ENCODE measurements at regions of chr4 and their contacts with region 1.

Region 1: GRCh38 chr4:110193822-110194761 is 4.3 kb downstream of the ELOVL6 start:
- DNase-seq: peak; percentile 35 to 88 (median 80)
- ATAC-seq: peak; percentile 90
- H3K4me3 ChIP-seq: no peak overlapping the region
- H3K4me3 Mint-ChIP-seq: peak overlapping the region in 9 of 10 donors; percentile 19 to 70 (median 49)
- H3K27ac ChIP-seq: peak overlapping the region; percentile 59
- H3K27ac Mint-ChIP-seq: peak overlapping the region; percentile 68 to 97 (median 92)
- H3K4me1 ChIP-seq: peaks cover 0 to 11% of the 10 kb centered on the region in 2 donors
- H3K4me1 Mint-ChIP-seq: peaks cover 16 to 51% (median 29%) of the 10 kb centered on the region in 7 donors
- H3K27me3 ChIP-seq: no peaks in the 10 kb centered on the region
- H3K27me3 Mint-ChIP-seq: no peaks in the 10 kb centered on the region

Region 2: DNA sequence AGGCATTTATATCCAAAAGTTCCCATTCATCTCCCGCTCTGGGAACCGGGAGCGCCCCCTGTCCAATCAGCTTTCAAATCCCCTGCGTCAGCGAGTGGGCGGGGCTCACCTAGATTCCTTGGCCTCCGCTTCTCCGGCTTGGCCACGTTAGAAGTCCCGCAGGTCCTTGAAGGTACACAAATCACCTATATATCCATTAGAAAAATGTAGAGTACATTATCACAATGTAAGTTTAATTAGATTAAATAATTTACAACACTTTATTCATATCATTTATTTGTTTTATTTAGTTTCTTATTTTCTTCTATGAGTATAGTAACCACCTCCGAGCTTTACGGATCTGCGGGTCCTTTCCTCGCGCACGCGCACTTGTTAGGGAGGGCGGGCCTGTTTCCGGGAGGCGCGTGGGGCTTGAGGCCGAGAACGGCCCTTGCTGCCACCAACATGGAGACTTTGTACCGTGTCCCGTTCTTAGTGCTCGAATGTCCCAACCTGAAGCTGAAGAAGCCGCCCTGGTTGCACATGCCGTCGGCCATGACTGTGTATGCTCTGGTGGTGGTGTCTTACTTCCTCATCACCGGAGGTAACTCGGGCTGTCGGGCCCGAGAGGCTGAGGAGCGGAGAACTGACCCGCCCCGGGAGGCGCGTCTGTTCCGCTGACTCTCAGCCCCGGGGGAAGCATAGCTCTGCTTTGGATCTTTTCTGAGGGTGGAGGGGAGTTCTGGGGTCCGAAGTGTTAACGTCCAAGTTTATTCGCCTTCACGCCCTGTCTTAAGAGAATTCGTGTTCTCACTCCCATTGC is 1543.7 kb before region 1 on chr4 and contains the start of gene OSTC:
- CTCF ChIA-PET with region 1: no interaction called
- POLR2A ChIA-PET with region 1: no interaction called
- intact Hi-C with region 1: loop called (anchors 2 to 10 kb)
- DNase-seq: peak; percentile 88 to 95 (median 91)
- ATAC-seq: peak; percentile 94
- H3K4me3 ChIP-seq: peak within 1 kb of the TSS; percentile 98
- H3K4me3 Mint-ChIP-seq: peak within 1 kb of the TSS; percentile 90 to 99 (median 94)
- H3K27ac ChIP-seq: peak within 1 kb of the TSS; percentile 96
- H3K27ac Mint-ChIP-seq: peak within 1 kb of the TSS; percentile 89 to 99 (median 98)
- H3K4me1 ChIP-seq: peaks cover 8 to 13% of the 10 kb centered on the region in 2 donors
- H3K4me1 Mint-ChIP-seq: peaks cover 22 to 49% (median 41%) of the 10 kb centered on the region in 7 donors
- H3K27me3 ChIP-seq: no peaks in the 10 kb centered on the region
- H3K27me3 Mint-ChIP-seq: no peaks in the 10 kb centered on the region
- total RNA-seq, gene OSTC: 31.8 to 98.2 (median 55.6) TPM

Region 3: DNA sequence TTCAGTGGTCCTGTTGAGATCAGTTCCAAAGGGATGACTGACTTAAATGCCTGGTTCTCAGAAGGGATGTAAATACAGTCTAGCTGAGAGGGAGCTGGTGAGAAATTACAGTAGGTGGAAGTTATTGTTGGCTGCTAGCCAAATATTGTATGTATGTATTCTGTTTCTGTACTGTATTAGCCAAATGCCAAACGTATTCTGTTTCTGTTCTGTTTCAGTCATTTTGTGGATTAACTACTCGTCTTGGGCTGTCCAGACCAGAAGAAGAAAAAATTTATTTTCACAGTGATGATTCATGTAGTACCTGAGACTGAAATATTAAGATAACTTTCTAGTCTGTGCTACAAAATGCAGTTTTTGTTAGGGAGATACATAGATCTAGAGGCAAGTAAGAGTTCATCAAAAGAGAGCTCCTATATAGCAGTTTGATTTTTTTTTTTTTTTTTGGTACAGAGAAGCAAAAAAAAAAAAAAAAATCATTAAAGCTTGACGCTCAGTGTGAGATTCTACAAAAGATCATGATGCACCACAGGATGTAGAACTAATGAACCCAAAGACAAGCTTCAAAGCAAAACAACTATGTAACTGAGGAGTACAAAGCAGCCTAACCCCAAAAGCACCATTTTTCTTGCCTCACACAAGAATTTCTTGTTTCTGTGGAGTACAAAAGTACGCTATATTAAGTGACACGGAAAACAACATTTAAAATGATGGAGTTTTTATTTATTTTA is 545.7 kb before region 1 on chr4:
- CTCF ChIA-PET with region 1: no interaction called
- POLR2A ChIA-PET with region 1: no interaction called
- intact Hi-C with region 1: loop called in 1 of 2 experiments (anchors 10 kb)
- DNase-seq: peak in 7 of 9 donors; percentile 69 to 91 (median 84)
- ATAC-seq: peak; percentile 96
- H3K4me3 ChIP-seq: peak overlapping the region; percentile 41
- H3K4me3 Mint-ChIP-seq: peak overlapping the region in 8 of 10 donors; percentile 59 to 88 (median 82)
- H3K27ac ChIP-seq: peak overlapping the region; percentile 81
- H3K27ac Mint-ChIP-seq: peak overlapping the region in 5 of 9 donors; percentile 92 to 100 (median 97)
- H3K4me1 ChIP-seq: peaks cover 68 to 70% of the 10 kb centered on the region in 2 donors
- H3K4me1 Mint-ChIP-seq: peaks cover 21 to 43% (median 34%) of the 10 kb centered on the region in 7 donors
- H3K27me3 ChIP-seq: no peaks in the 10 kb centered on the region
- H3K27me3 Mint-ChIP-seq: no peaks in the 10 kb centered on the region

Region 4: GRCh38 chr4:110049951-110050925 is 143.9 kb before region 1 on chr4:
- CTCF ChIA-PET with region 1: no interaction called
- POLR2A ChIA-PET with region 1: interaction called, 3 read pairs
- intact Hi-C with region 1: loop called (anchors 1 kb)
- DNase-seq: peak; percentile 16 to 56 (median 38)
- ATAC-seq: peak; percentile 76
- H3K4me3 ChIP-seq: no peak overlapping the region
- H3K4me3 Mint-ChIP-seq: no peak overlapping the region
- H3K27ac ChIP-seq: no peak overlapping the region
- H3K27ac Mint-ChIP-seq: peak overlapping the region in 1 of 9 donors; percentile 33
- H3K4me1 ChIP-seq: peaks cover 0 to 4% of the 10 kb centered on the region in 2 donors
- H3K4me1 Mint-ChIP-seq: peaks cover 0 to 34% (median 0%) of the 10 kb centered on the region in 7 donors
- H3K27me3 ChIP-seq: no peaks in the 10 kb centered on the region
- H3K27me3 Mint-ChIP-seq: no peaks in the 10 kb centered on the region

Region 5: DNA sequence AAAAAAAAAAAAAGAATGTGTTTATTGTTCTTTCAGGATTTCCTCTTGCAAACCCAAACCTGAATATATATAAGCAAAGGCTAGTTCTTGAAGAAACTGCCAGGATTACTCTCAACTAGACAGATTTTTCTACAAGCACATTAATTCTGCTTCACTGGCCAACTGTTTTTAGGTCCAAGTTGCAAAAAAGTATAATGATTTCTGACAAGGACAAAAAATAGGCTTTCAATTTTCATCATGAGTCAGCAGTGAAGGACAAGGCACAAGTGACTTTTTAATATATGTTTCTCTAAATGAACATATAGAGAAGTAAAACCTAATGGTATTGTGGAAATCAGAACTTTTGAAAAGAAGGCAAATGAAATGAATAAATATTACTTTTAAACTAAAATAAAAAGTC is 69.4 kb before region 1 on chr4:
- CTCF ChIA-PET with region 1: no interaction called
- POLR2A ChIA-PET with region 1: no interaction called
- intact Hi-C with region 1: no loop called
- DNase-seq: no peak
- ATAC-seq: no peak
- H3K4me3 ChIP-seq: no peak overlapping the region
- H3K4me3 Mint-ChIP-seq: no peak overlapping the region
- H3K27ac ChIP-seq: no peak overlapping the region
- H3K27ac Mint-ChIP-seq: no peak overlapping the region
- H3K4me1 ChIP-seq: peaks cover 0 to 1% of the 10 kb centered on the region in 2 donors
- H3K4me1 Mint-ChIP-seq: peaks cover 2 to 32% (median 3%) of the 10 kb centered on the region in 7 donors
- H3K27me3 ChIP-seq: no peaks in the 10 kb centered on the region
- H3K27me3 Mint-ChIP-seq: no peaks in the 10 kb centered on the region

Region 6: GRCh38 chr4:110165382-110166285 is 28.5 kb before region 1 on chr4:
- CTCF ChIA-PET with region 1: interaction called, 3 read pairs
- POLR2A ChIA-PET with region 1: interaction called, 31 read pairs
- intact Hi-C with region 1: loop called (anchors 1 kb)
- DNase-seq: peak; percentile 12 to 79 (median 69)
- ATAC-seq: peak; percentile 99
- H3K4me3 ChIP-seq: no peak overlapping the region
- H3K4me3 Mint-ChIP-seq: peak overlapping the region; percentile 42 to 82 (median 68)
- H3K27ac ChIP-seq: peak overlapping the region; percentile 56
- H3K27ac Mint-ChIP-seq: peak overlapping the region; percentile 87 to 98 (median 95)
- H3K4me1 ChIP-seq: peaks cover 13 to 22% of the 10 kb centered on the region in 2 donors
- H3K4me1 Mint-ChIP-seq: peaks cover 20 to 41% (median 38%) of the 10 kb centered on the region in 7 donors
- H3K27me3 ChIP-seq: no peaks in the 10 kb centered on the region
- H3K27me3 Mint-ChIP-seq: no peaks in the 10 kb centered on the region

Region 7: DNA sequence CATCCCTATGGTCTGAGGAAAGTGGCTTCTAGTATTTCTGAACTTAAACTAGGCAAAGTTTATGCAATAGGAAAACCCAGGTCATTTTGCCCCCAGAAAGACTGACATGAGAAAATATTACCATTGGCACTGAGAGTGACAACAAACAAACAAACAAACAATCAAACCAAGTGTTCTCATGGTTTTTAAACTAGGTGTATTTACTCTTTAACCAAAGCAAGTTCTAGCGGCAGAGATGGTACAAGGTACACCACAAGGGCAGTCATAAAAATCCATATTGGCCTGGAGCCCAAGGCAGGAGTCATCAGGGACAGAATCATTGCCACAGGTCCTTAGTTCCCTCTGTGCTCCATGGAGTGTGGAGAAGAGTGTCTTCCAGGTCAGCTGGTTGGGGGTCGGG is 255.9 kb after region 1 on chr4:
- CTCF ChIA-PET with region 1: no interaction called
- POLR2A ChIA-PET with region 1: no interaction called
- intact Hi-C with region 1: no loop called
- DNase-seq: no peak
- ATAC-seq: no peak
- H3K4me3 ChIP-seq: no peak overlapping the region
- H3K4me3 Mint-ChIP-seq: no peak overlapping the region
- H3K27ac ChIP-seq: no peak overlapping the region
- H3K27ac Mint-ChIP-seq: no peak overlapping the region
- H3K4me1 ChIP-seq: no peaks in the 10 kb centered on the region
- H3K4me1 Mint-ChIP-seq: peaks cover 0 to 2% (median 0%) of the 10 kb centered on the region in 7 donors
- H3K27me3 ChIP-seq: no peaks in the 10 kb centered on the region
- H3K27me3 Mint-ChIP-seq: peaks cover 7 to 22% (median 8%) of the 10 kb centered on the region in 5 donors

Region 8: GRCh38 chr4:112145326-112145819 is 1951.3 kb after region 1 on chr4 and contains the start of gene FAM241A:
- CTCF ChIA-PET with region 1: no interaction called
- POLR2A ChIA-PET with region 1: no interaction called
- intact Hi-C with region 1: loop called in 1 of 2 experiments (anchors 5 kb)
- DNase-seq: peak; percentile 81 to 92 (median 88)
- ATAC-seq: peak; percentile 98
- H3K4me3 ChIP-seq: peak within 1 kb of the TSS; percentile 89
- H3K4me3 Mint-ChIP-seq: peak within 1 kb of the TSS; percentile 90 to 99 (median 94)
- H3K27ac ChIP-seq: peak within 1 kb of the TSS; percentile 78
- H3K27ac Mint-ChIP-seq: peak within 1 kb of the TSS; percentile 75 to 98 (median 95)
- H3K4me1 ChIP-seq: peaks cover 0 to 12% of the 10 kb centered on the region in 2 donors
- H3K4me1 Mint-ChIP-seq: peaks cover 16 to 44% (median 40%) of the 10 kb centered on the region in 7 donors
- H3K27me3 ChIP-seq: no peaks in the 10 kb centered on the region
- H3K27me3 Mint-ChIP-seq: peaks cover 0 to 5% (median 0%) of the 10 kb centered on the region in 5 donors
- total RNA-seq, gene FAM241A: 1.2 to 2.4 (median 2.0) TPM